ENCODE measurements at regions of chr5 and their contacts with region 1.

Region 1: DNA sequence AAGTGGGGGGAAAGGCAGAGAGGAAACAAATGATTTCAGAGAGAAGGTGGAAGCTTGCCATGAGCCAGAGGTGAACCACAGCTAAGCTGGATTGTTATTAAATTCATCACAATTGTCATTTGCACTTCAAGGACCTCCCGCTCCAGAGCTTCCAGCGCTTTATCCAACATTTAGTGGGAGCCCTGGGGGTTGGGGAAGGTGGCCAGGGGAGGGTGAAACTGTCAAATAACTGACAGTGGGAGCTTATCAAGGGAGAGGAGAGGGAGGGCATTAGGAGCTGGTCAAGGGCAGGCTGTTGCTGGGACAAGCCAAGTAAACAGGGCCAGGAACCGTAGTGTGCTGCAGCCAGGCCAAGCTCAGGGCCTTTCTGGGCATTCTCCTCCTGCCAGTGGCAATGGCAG is 71.5 kb downstream of the SIL1 start:
- DNase-seq: peak; percentile 60 to 64
- ATAC-seq: peak; percentile 72 to 94 (median 86)
- H3K4me3 ChIP-seq: no peak overlapping the region
- H3K27ac ChIP-seq: peak overlapping the region; percentile 52 to 88 (median 83)
- H3K4me1 ChIP-seq: peaks cover 8 to 51% (median 37%) of the 10 kb centered on the region in 9 donors
- H3K27me3 ChIP-seq: no peaks in the 10 kb centered on the region
- CTCF ChIP-seq: no peak

Region 2: DNA sequence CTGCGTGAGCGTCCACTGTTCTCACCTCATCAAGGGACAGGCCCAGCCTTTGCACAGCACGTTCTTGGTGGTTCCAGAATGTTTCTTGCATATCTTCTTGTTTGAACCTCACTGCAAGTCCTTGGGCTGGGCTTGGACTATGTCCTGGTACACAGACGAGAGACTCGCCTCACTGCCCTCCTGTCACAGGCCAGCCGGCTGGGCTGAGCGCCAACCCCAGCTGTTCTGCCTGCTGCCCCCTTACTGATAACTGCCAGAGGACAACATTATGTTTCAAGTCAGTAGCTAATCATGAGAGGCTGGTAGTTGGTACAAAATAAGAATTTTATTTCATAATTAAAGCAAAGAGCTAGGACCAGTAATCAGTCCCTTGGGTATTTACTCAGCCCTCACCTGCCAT is 198.7 kb before region 1 on chr5:
- intact Hi-C with region 1: loop called in 1 of 10 experiments (anchors 2 kb)
- DNase-seq: peak; percentile 76 to 82
- ATAC-seq: peak; percentile 76 to 95 (median 90)
- H3K4me3 ChIP-seq: no peak overlapping the region
- H3K27ac ChIP-seq: peak overlapping the region; percentile 19 to 81 (median 64)
- H3K4me1 ChIP-seq: peaks cover 0 to 48% (median 31%) of the 10 kb centered on the region in 9 donors
- H3K27me3 ChIP-seq: no peaks in the 10 kb centered on the region
- CTCF ChIP-seq: no peak

Region 3: GRCh38 chr5:139027150-139027549 is 99.6 kb before region 1 on chr5:
- intact Hi-C with region 1: no loop called
- DNase-seq: no peak
- ATAC-seq: no peak
- H3K4me3 ChIP-seq: no peak overlapping the region
- H3K27ac ChIP-seq: peak overlapping the region in 6 of 10 donors; percentile 6 to 49 (median 24)
- H3K4me1 ChIP-seq: peaks cover 0 to 20% (median 10%) of the 10 kb centered on the region in 9 donors
- H3K27me3 ChIP-seq: no peaks in the 10 kb centered on the region
- CTCF ChIP-seq: no peak